ENCODE measurements at regions of chr6 and their contacts with region 1.

Region 1: GRCh38 chr6:63643862-63644261 is 8.3 kb downstream of the PHF3 start:
- DNase-seq: no peak
- ATAC-seq: no peak
- H3K4me3 ChIP-seq: no peak overlapping the region
- H3K27ac ChIP-seq: no peak overlapping the region
- H3K4me1 ChIP-seq: peaks cover 69% of the 10 kb centered on the region
- H3K27me3 ChIP-seq: no peaks in the 10 kb centered on the region
- CTCF ChIP-seq: no peak
- EP300 ChIP-seq: no peak
- POLR2A ChIP-seq: no peak
- RAD21 ChIP-seq: no peak

Region 2: GRCh38 chr6:63452124-63452523 is 191.7 kb before region 1 on chr6:
- CTCF ChIA-PET with region 1: no interaction called
- POLR2A ChIA-PET with region 1: no interaction called
- in situ Hi-C with region 1: no loop called
- intact Hi-C with region 1: no loop called
- DNase-seq: peak; percentile 93
- ATAC-seq: peak; percentile 99
- H3K4me3 ChIP-seq: peak overlapping the region in 1 of 3 experiments; percentile 5; a peak in 1 of 6 replicates
- H3K27ac ChIP-seq: peak overlapping the region; percentile 79
- H3K4me1 ChIP-seq: peaks cover 90% of the 10 kb centered on the region
- H3K27me3 ChIP-seq: no peaks in the 10 kb centered on the region
- CTCF ChIP-seq: peak; percentile 17; the same call in 1 of the 2 replicates
- EP300 ChIP-seq: peak; percentile 82 to 94; a peak in 3 of 4 replicates
- POLR2A ChIP-seq: 0 out of 4 replicates have a peak, but pooled peaks of 1 of the 2 experiments have one; percentile 32
- RAD21 ChIP-seq: peak; percentile 47; the same call in 1 of the 2 replicates

Region 3: GRCh38 chr6:63663147-63663877 is 19.4 kb after region 1 on chr6:
- CTCF ChIA-PET with region 1: no interaction called
- POLR2A ChIA-PET with region 1: no interaction called
- in situ Hi-C with region 1: no loop called
- intact Hi-C with region 1: loop called (anchors 2 kb)
- DNase-seq: no peak
- ATAC-seq: peak; percentile 37; the same call in 1 of the 3 replicates
- H3K4me3 ChIP-seq: no peak overlapping the region
- H3K27ac ChIP-seq: no peak overlapping the region
- H3K4me1 ChIP-seq: peaks cover 24% of the 10 kb centered on the region
- H3K27me3 ChIP-seq: no peaks in the 10 kb centered on the region
- CTCF ChIP-seq: no peak
- EP300 ChIP-seq: no peak
- POLR2A ChIP-seq: no peak
- RAD21 ChIP-seq: no peak

Region 4: GRCh38 chr6:63882224-63882623 is 238.4 kb after region 1 on chr6:
- CTCF ChIA-PET with region 1: no interaction called
- POLR2A ChIA-PET with region 1: no interaction called
- in situ Hi-C with region 1: no loop called
- intact Hi-C with region 1: no loop called
- DNase-seq: peak; percentile 8
- ATAC-seq: peak; percentile 91
- H3K4me3 ChIP-seq: no peak overlapping the region
- H3K27ac ChIP-seq: no peak overlapping the region
- H3K4me1 ChIP-seq: no peaks in the 10 kb centered on the region
- H3K27me3 ChIP-seq: peaks cover 0 to 6% of the 10 kb centered on the region in 2 experiments; a peak in 1 of 5 replicates
- CTCF ChIP-seq: no peak
- EP300 ChIP-seq: no peak
- POLR2A ChIP-seq: no peak
- RAD21 ChIP-seq: no peak

Measured in HepG2 (cell line).